ENCODE measurements at regions of chr1 and their contacts with region 1.

Region 1: DNA sequence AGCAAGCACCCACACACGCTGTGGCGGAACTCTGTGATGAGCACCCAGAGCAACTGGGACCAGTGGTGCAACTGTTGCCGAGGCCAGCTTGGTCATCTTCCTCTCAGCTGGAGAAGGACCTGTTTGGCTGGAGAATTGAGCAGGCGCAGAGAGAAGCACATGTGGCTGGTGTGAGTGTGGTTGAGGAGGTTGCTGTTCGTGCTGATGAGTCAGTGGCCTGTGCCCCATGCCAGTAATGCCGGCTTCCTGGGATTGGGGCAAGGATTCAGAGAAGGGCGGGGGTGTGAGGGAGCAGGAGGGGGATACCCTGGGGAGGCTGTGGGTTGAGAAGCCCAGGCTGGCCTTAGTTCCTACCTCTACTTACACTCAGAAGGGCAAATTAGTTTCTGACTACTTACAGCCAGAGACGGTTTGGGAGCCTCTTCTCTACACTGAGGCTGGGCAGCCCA is 57.5 kb upstream of the EPS8L3 start:
- DNase-seq: peak; percentile 88 to 97
- H3K4me3 ChIP-seq: no peak overlapping the region
- H3K27ac ChIP-seq: peak overlapping the region; percentile 85
- H3K4me1 ChIP-seq: peaks cover 61% of the 10 kb centered on the region
- H3K27me3 ChIP-seq: no peaks in the 10 kb centered on the region
- CTCF ChIP-seq: no peak

Region 2: DNA sequence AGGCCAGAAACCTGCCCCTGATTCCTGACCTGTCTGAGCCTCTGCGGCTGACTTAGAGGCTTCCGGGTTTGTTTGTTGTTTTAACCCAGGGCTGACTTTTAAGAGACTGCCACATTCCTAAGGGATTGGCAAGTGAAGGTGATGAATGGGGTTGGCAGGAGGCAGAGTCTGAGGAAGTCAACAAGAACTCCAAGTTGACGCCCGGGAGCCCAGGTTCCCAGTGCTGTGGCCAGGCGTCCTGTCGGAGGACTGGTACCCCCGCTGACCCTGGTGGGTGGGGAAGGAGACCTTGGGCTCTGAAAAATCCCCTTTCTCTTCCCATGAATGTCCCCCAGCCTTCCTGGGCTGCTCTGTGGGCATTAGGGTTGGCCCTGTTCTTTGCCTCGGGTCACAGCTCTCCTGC is 37.8 kb before region 1 on chr1:
- CTCF ChIA-PET with region 1: interaction called, 5 read pairs
- POLR2A ChIA-PET with region 1: interaction called, 4 read pairs
- intact Hi-C with region 1: loop called (anchors 2 kb)
- DNase-seq: peak; percentile 77 to 99
- H3K4me3 ChIP-seq: peak overlapping the region; percentile 12; the same call in 1 of the 2 replicates
- H3K27ac ChIP-seq: peak overlapping the region; percentile 89
- H3K4me1 ChIP-seq: peaks cover 76% of the 10 kb centered on the region
- H3K27me3 ChIP-seq: no peaks in the 10 kb centered on the region
- CTCF ChIP-seq: no peak

Region 3: GRCh38 chr1:109877320-109877771 is 56.1 kb after region 1 on chr1:
- CTCF ChIA-PET with region 1: no interaction called
- POLR2A ChIA-PET with region 1: no interaction called
- intact Hi-C with region 1: loop called (anchors 1 kb)
- DNase-seq: peak; percentile 82 to 93
- H3K4me3 ChIP-seq: peak overlapping the region; percentile 30; the same call in 1 of the 2 replicates
- H3K27ac ChIP-seq: peak overlapping the region; percentile 82
- H3K4me1 ChIP-seq: peaks cover 44% of the 10 kb centered on the region
- H3K27me3 ChIP-seq: no peaks in the 10 kb centered on the region
- CTCF ChIP-seq: peak; percentile 56; the same call in 1 of the 2 replicates

Region 4: GRCh38 chr1:109910123-109910962 is 89.1 kb after region 1 on chr1 and contains the start of gene CSF1:
- CTCF ChIA-PET with region 1: no interaction called
- POLR2A ChIA-PET with region 1: no interaction called
- intact Hi-C with region 1: loop called (anchors 2 kb)
- DNase-seq: peak; percentile 53 to 58
- H3K4me3 ChIP-seq: peak within 1 kb of the TSS; percentile 98
- H3K27ac ChIP-seq: 0 out of 2 replicates have a peak within 1 kb of the TSS, but pooled peaks have one; percentile 9
- H3K4me1 ChIP-seq: peaks cover 44% of the 10 kb centered on the region
- H3K27me3 ChIP-seq: no peaks in the 10 kb centered on the region
- CTCF ChIP-seq: no peak
- total RNA-seq, gene CSF1: 29.8 and 35.2 TPM in 2 replicates

Region 5: GRCh38 chr1:110196917-110197765 is 375.9 kb after region 1 on chr1:
- CTCF ChIA-PET with region 1: no interaction called
- POLR2A ChIA-PET with region 1: no interaction called
- intact Hi-C with region 1: no loop called
- DNase-seq: peak; percentile 45 to 68
- H3K4me3 ChIP-seq: no peak overlapping the region
- H3K27ac ChIP-seq: no peak overlapping the region
- H3K4me1 ChIP-seq: peaks cover 12% of the 10 kb centered on the region
- H3K27me3 ChIP-seq: no peaks in the 10 kb centered on the region
- CTCF ChIP-seq: peak; percentile 100

Measured in PC-9 (cell line).